Natural killer cell (primary cell): ENCODE measurements at regions of chr17 and their contacts with region 1.

Region 1: DNA sequence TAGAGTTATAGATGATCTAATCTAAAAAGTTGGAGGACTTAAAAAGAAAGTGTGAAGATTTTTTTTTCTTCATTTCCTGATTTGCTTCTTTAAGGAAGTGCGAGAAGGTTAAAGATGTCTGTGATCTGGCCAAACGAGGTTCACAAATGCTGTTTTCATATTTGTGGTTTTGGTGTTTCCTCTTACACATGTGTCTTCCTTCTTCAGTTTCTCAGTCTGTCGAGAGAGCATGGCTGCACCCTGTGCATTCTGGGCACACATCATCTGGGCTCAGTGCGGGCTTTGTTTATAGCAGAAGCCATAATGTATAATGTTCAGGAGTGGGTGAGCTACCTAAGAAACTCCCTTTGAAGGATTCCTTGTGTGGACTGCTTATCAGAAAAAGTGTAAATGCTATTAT is 260.4 kb upstream of the TBX2 start:
- DNase-seq: peak; percentile 31 to 84
- ATAC-seq: peak; percentile 95 to 98 (median 96)
- H3K4me3 ChIP-seq: no peak overlapping the region
- H3K4me3 Mint-ChIP-seq: peak overlapping the region; percentile 78
- H3K27ac ChIP-seq: peak overlapping the region; percentile 64
- H3K27ac Mint-ChIP-seq: peak overlapping the region; percentile 86 to 89
- H3K4me1 ChIP-seq: peaks cover 11% of the 10 kb centered on the region
- H3K4me1 Mint-ChIP-seq: peaks cover 21 to 22% of the 10 kb centered on the region in 2 donors
- H3K27me3 ChIP-seq: no peaks in the 10 kb centered on the region
- H3K27me3 Mint-ChIP-seq: no peaks in the 10 kb centered on the region
- CTCF ChIP-seq: no peak

Region 2: DNA sequence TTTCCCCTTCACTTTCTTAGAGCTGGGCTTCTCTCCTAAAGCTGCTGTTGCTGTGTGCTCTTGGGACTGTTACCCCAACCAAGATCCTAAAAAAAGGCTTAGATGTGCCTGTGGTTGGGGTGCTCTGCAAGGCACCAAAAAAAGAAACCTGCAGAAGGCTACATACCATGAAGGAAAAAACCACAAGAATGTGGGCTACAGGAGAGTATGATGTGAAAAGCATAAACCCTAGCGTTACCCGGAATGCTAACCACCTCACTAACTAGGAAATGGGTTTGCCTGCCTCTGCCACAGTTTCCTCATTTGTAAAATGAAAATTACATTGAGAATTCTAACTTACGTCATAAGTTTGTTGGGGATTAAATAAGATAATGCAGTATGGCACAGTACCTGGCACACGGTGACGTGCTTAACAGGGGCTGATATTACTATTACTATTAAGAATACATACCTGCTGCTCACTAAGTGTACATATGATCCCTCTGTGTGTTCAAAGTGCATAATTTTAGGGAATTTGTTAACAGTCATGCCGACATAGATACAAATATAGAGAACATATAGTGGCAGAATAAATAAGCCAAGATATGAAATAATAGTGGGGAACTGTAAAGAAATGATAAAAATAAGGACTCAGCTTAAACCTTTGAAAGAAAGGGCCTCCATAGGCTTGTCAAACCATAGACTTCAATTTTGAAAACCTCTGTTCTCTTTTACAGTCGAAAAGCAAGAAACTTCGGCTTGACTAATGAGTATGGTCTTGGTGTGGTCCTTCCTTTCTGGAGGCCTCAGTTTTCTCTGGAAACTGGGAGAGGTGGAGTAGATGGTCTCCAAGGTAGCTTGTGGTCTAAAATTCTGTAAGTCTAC is 82.6 kb after region 1 on chr17:
- intact Hi-C with region 1: loop called (anchors 1 kb)
- DNase-seq: peak in 1 of 2 donors; percentile 43
- ATAC-seq: peak; percentile 22 to 62 (median 48)
- H3K4me3 ChIP-seq: no peak overlapping the region
- H3K4me3 Mint-ChIP-seq: peak overlapping the region; percentile 87
- H3K27ac ChIP-seq: no peak overlapping the region
- H3K27ac Mint-ChIP-seq: peak overlapping the region; percentile 81 to 85
- H3K4me1 ChIP-seq: peaks cover 29% of the 10 kb centered on the region
- H3K4me1 Mint-ChIP-seq: peaks cover 40 to 55% of the 10 kb centered on the region in 2 donors
- H3K27me3 ChIP-seq: no peaks in the 10 kb centered on the region
- H3K27me3 Mint-ChIP-seq: no peaks in the 10 kb centered on the region
- CTCF ChIP-seq: no peak

Region 3: GRCh38 chr17:61235827-61236197 is 96.6 kb after region 1 on chr17:
- intact Hi-C with region 1: no loop called
- DNase-seq: no peak
- ATAC-seq: no peak
- H3K4me3 ChIP-seq: no peak overlapping the region
- H3K4me3 Mint-ChIP-seq: no peak overlapping the region
- H3K27ac ChIP-seq: no peak overlapping the region
- H3K27ac Mint-ChIP-seq: no peak overlapping the region
- H3K4me1 ChIP-seq: no peaks in the 10 kb centered on the region
- H3K4me1 Mint-ChIP-seq: peaks cover 13 to 16% of the 10 kb centered on the region in 2 donors
- H3K27me3 ChIP-seq: no peaks in the 10 kb centered on the region
- H3K27me3 Mint-ChIP-seq: no peaks in the 10 kb centered on the region
- CTCF ChIP-seq: no peak

Region 4: DNA sequence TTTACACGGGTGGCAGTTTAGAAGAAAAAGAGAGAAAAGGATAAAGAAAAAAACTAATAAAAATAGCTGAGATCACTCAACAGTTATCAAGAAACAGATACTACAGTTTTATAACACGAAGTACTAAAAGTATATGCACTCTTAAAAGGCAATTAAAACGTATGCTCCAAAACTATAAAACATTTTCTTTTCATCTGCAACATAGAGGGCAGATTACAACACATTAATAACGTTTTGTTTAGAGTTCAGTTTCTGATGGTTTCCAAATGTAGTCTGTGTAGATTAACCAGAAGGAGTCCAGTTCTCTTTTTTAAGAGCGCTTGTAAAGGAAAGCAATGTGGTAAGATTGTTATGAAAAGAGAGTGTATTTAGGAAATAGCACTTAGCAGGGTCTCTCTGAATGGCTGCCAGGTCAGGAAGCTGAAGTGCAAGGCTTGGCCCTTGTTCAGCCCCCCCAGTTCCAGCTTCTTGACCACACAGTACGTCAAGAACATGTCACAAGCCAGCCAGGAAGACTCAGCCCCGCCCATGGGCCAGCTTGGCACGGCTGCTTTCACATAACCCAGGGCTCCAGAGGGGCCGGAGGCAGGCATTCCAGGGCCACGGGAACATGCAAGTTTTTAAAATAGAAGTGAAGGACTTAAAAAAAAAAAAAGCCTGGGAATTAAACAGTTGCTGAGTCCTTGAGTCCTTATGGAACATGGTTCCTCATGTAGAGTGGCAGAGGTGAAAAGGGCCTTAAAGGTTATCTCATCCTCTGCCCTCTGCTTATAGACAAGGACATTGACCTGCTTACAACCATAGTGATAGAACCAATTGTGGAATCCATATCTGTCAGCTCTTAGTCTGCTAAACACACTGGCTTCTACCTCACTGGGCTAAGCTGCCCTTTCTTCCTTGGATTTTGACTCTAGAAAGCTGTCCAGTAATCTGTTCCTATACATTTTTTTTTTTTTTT is 113.0 kb after region 1 on chr17:
- intact Hi-C with region 1: loop called (anchors 10 kb)
- DNase-seq: peak; percentile 41 to 63
- ATAC-seq: peak; percentile 96 to 98 (median 96)
- H3K4me3 ChIP-seq: no peak overlapping the region
- H3K4me3 Mint-ChIP-seq: peak overlapping the region; percentile 49
- H3K27ac ChIP-seq: peak overlapping the region; percentile 89
- H3K27ac Mint-ChIP-seq: peak overlapping the region; percentile 93 to 94
- H3K4me1 ChIP-seq: peaks cover 27% of the 10 kb centered on the region
- H3K4me1 Mint-ChIP-seq: peaks cover 37 to 48% of the 10 kb centered on the region in 2 donors
- H3K27me3 ChIP-seq: no peaks in the 10 kb centered on the region
- H3K27me3 Mint-ChIP-seq: no peaks in the 10 kb centered on the region
- CTCF ChIP-seq: no peak